HAP-1 (cell line): ENCODE measurements at regions of chr21 and their contacts with region 1.

Region 1: DNA sequence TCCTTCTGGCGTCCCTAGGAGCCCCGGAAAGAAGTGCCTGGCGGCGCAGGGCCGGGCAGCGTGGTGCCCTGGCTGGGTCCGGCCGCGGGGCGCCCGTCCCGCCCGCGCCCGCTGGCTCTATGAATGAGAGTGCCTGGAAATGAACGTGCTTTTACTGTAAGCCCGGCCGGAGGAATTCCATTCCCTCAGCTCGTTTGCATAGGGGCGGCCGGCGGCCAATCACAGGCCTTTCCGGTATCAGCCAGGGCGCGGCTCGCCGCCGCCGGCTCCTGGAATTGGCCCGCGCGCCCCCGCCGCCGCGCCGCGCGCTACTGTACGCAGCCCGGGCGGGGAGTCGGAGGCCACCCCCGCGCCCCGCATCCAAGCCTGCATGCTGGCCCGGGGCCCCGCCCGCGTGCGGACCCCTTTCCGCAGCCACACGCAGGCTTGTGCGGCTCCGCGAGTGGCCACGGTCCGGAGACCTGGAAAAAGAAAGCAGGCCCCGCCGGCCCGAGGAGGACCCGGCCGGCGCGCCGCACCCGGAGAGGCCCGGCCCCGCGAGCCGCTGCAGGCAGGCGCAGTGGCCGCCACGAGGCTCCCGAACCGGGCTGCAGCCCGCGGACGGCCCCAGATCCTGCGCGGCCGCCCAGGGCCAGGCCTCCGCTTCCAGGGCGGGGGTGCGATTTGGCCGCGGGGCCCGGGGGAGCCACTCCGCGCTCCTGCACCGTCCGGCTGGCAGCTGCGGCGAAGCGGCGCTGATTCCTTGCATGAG is 160.4 kb downstream of the RUNX1 start:
- DNase-seq: peak; percentile 93
- H3K4me3 ChIP-seq: peak overlapping the region; percentile 58
- H3K4me1 ChIP-seq: peaks cover 13% of the 10 kb centered on the region
- H3K27me3 ChIP-seq: peaks cover 28% of the 10 kb centered on the region

Region 2: GRCh38 chr21:34614633-34615486 is 273.9 kb before region 1 on chr21 and contains the start of gene RCAN1:
- in situ Hi-C with region 1: loop called (anchors 25 kb)
- DNase-seq: peak; percentile 92 to 96
- H3K4me3 ChIP-seq: peak within 1 kb of the TSS; percentile 44
- H3K4me1 ChIP-seq: peaks cover 28% of the 10 kb centered on the region
- H3K27me3 ChIP-seq: no peaks in the 10 kb centered on the region

Region 3: GRCh38 chr21:34745557-34746255 is 143.0 kb before region 1 on chr21:
- in situ Hi-C with region 1: loop called (anchors 10 kb)
- DNase-seq: peak; percentile 84
- H3K4me3 ChIP-seq: peak overlapping the region; percentile 22
- H3K4me1 ChIP-seq: peaks cover 3% of the 10 kb centered on the region; the same call in 1 of the 2 replicates
- H3K27me3 ChIP-seq: no peaks in the 10 kb centered on the region

Region 4: GRCh38 chr21:34946916-34947534 is 58.3 kb after region 1 on chr21:
- in situ Hi-C with region 1: loop called (anchors 10 kb)
- DNase-seq: no peak
- H3K4me3 ChIP-seq: no peak overlapping the region
- H3K4me1 ChIP-seq: no peaks in the 10 kb centered on the region
- H3K27me3 ChIP-seq: no peaks in the 10 kb centered on the region

Region 5: DNA sequence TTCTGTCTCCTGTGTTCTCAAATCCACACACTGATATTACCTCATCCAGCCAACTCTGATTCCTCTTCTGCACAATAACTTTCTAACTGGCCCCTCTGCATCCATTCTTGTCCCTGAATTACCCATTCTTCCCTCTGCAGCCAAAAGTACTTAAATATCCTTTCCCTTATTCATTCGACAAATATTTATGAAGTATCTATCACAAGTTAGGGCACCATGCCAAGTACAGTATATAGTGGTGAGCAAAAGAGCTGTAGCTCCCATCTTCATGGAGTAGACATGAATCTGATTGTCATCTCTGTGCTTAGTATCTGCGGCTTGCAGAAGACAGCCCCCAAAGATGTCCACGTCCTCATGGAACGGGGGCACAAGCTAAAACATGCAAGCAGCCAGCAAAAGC is 854.8 kb after region 1 on chr21:
- in situ Hi-C with region 1: no loop called
- DNase-seq: no peak
- H3K4me3 ChIP-seq: no peak overlapping the region
- H3K4me1 ChIP-seq: no peaks in the 10 kb centered on the region
- H3K27me3 ChIP-seq: no peaks in the 10 kb centered on the region

Region 6: GRCh38 chr21:35840197-35840799 is 951.6 kb after region 1 on chr21:
- in situ Hi-C with region 1: loop called (anchors 25 kb)
- DNase-seq: peak; percentile 63 to 65
- H3K4me3 ChIP-seq: no peak overlapping the region
- H3K4me1 ChIP-seq: no peaks in the 10 kb centered on the region
- H3K27me3 ChIP-seq: no peaks in the 10 kb centered on the region